ENCODE measurements at regions of chr17 and their contacts with region 1.

Region 1: GRCh38 chr17:31935512-31935911 is 1.3 kb upstream of the SUZ12 start:
- DNase-seq: no peak
- H3K4me3 ChIP-seq: no peak overlapping the region
- H3K27ac ChIP-seq: no peak overlapping the region
- H3K4me1 ChIP-seq: peaks cover 9% of the 10 kb centered on the region
- H3K27me3 ChIP-seq: no peaks in the 10 kb centered on the region
- CTCF ChIP-seq: no peak

Region 2: DNA sequence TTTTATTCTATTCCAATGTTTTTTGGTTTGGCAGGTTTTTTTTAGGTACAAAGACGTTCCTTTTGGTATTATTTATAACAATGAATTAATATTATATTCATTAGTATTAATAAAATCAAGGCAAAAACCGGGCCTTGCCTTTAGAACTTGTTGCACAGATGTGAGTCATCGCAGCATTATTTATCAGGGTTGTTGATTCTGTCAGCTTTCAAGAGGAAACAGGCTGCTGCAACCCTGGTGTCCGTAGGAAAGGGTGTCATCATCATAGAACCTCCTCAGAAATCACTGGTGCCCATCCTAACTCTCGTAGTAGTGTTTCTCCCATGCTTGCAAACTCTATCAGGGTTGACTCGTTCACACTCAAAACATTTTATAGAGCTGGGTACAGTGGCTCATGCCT is 61.5 kb after region 1 on chr17:
- CTCF ChIA-PET with region 1: no interaction called
- POLR2A ChIA-PET with region 1: no interaction called
- intact Hi-C with region 1: loop called (anchors 10 kb)
- DNase-seq: no peak
- H3K4me3 ChIP-seq: no peak overlapping the region
- H3K27ac ChIP-seq: no peak overlapping the region
- H3K4me1 ChIP-seq: no peaks in the 10 kb centered on the region
- H3K27me3 ChIP-seq: no peaks in the 10 kb centered on the region
- CTCF ChIP-seq: no peak

Region 3: DNA sequence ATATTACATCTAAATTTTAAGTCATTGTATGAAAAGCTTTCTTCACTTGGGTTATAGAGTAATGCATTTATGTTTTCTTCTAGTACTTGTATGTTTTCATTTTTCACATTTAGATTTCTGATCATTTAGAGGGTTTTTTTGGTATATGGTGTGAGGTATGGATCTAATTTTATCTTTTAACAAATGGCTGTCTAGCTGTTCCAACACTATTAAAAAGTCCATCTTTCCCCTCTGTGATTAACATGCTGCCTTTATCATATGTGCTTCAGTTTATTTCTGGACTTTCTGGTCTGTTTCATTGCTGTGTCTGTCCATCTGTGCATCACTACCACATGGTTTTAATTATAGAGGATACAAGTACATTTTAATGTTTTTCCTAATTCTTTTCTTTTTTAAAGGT is 777.6 kb after region 1 on chr17:
- CTCF ChIA-PET with region 1: no interaction called
- POLR2A ChIA-PET with region 1: no interaction called
- intact Hi-C with region 1: no loop called
- DNase-seq: no peak
- H3K4me3 ChIP-seq: no peak overlapping the region
- H3K27ac ChIP-seq: no peak overlapping the region
- H3K4me1 ChIP-seq: no peaks in the 10 kb centered on the region
- H3K27me3 ChIP-seq: no peaks in the 10 kb centered on the region
- CTCF ChIP-seq: no peak